ENCODE measurements at regions of chr3 and their contacts with region 1.

Region 1: DNA sequence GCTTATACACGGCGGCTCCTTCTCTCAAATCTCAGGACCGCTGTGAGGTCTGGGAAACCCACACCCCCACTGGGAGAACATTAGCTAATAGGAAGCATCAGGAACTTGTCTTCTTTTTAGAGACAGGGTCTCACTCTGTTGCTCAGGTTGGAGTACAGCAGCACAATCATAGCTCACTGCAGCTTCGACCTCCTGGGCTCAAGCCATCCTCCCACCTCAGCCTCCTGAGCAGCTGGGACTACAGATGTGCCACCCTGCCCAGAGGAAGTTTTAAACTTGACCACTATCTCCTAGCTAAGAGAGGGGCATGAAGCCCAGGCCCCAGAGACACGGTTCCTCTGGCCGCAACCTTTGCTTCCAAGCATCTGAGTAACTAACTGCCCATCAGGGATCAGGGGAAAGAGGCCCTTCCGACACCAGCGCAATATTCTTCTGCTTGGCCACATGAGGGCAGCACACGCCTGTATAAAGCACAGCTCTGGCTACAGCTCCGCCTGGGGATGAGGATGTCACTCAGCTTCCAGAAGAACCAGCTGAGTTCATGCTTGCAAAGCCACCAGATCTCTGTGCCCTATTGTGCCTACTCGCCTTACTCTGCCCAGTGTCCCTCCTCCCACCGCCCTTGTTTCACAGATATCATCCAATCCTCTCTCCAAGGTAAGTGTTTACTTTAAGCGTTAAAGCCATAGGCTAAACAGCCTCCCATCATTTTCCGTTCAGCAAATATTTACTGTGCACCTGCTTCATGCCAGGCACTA is 57.5 kb upstream of the SLC6A11 start:
- DNase-seq: peak in 4 of 5 donors; percentile 23 to 33 (median 32)
- H3K4me3 ChIP-seq: no peak overlapping the region
- H3K4me3 Mint-ChIP-seq: no peak overlapping the region
- H3K27ac ChIP-seq: no peak overlapping the region
- H3K27ac Mint-ChIP-seq: no peak overlapping the region
- H3K4me1 ChIP-seq: no peaks in the 10 kb centered on the region
- H3K4me1 Mint-ChIP-seq: no peaks in the 10 kb centered on the region
- H3K27me3 ChIP-seq: no peaks in the 10 kb centered on the region
- H3K27me3 Mint-ChIP-seq: peaks cover 28 to 44% of the 10 kb centered on the region in 2 donors

Region 2: GRCh38 chr3:10122724-10123123 is 635.8 kb before region 1 on chr3:
- CTCF ChIA-PET with region 1: no interaction called
- POLR2A ChIA-PET with region 1: no interaction called
- intact Hi-C with region 1: no loop called
- DNase-seq: no peak
- H3K4me3 ChIP-seq: no peak overlapping the region
- H3K4me3 Mint-ChIP-seq: no peak overlapping the region
- H3K27ac ChIP-seq: no peak overlapping the region
- H3K27ac Mint-ChIP-seq: peak overlapping the region in 4 of 7 donors; percentile 44 to 84 (median 68)
- H3K4me1 ChIP-seq: peaks cover 26% of the 10 kb centered on the region
- H3K4me1 Mint-ChIP-seq: peaks cover 28 to 45% (median 37%) of the 10 kb centered on the region in 4 donors
- H3K27me3 ChIP-seq: no peaks in the 10 kb centered on the region
- H3K27me3 Mint-ChIP-seq: no peaks in the 10 kb centered on the region

Region 3: DNA sequence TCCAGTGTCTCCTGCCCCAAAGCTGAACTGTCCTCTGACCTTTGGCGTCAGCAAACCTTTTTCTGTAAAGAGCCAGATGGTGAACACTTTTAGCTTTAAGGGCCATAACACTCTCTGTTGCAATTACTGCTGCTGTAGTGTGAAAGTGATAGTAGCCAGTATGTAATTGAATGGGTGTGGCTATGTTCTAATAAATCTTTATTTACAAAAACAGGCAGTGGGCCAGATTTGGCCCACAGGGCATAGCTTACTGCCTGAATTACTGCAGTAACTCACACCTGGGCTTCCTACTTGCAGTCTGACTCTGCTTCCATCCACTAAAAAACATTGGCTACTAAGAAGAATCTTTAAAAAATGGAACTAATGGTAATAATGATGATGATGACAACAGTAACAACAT is 10.4 kb before region 1 on chr3:
- CTCF ChIA-PET with region 1: interaction called, 19 read pairs
- POLR2A ChIA-PET with region 1: no interaction called
- intact Hi-C with region 1: no loop called
- DNase-seq: no peak
- H3K4me3 ChIP-seq: no peak overlapping the region
- H3K4me3 Mint-ChIP-seq: no peak overlapping the region
- H3K27ac ChIP-seq: no peak overlapping the region
- H3K27ac Mint-ChIP-seq: no peak overlapping the region
- H3K4me1 ChIP-seq: no peaks in the 10 kb centered on the region
- H3K4me1 Mint-ChIP-seq: no peaks in the 10 kb centered on the region
- H3K27me3 ChIP-seq: no peaks in the 10 kb centered on the region
- H3K27me3 Mint-ChIP-seq: peaks cover 7 to 13% of the 10 kb centered on the region in 2 donors

Region 4: GRCh38 chr3:10772271-10773161 is 14.0 kb after region 1 on chr3:
- CTCF ChIA-PET with region 1: interaction called, 11 read pairs
- POLR2A ChIA-PET with region 1: no interaction called
- intact Hi-C with region 1: no loop called
- DNase-seq: no peak
- H3K4me3 ChIP-seq: no peak overlapping the region
- H3K4me3 Mint-ChIP-seq: no peak overlapping the region
- H3K27ac ChIP-seq: no peak overlapping the region
- H3K27ac Mint-ChIP-seq: no peak overlapping the region
- H3K4me1 ChIP-seq: no peaks in the 10 kb centered on the region
- H3K4me1 Mint-ChIP-seq: no peaks in the 10 kb centered on the region
- H3K27me3 ChIP-seq: no peaks in the 10 kb centered on the region
- H3K27me3 Mint-ChIP-seq: peaks cover 15 to 37% of the 10 kb centered on the region in 2 donors

Region 5: GRCh38 chr3:10783357-10784351 is 25.2 kb after region 1 on chr3:
- CTCF ChIA-PET with region 1: interaction called, 13 read pairs
- POLR2A ChIA-PET with region 1: no interaction called
- intact Hi-C with region 1: loop called (anchors 1 kb)
- DNase-seq: peak in 4 of 5 donors; percentile 16 to 33 (median 26)
- H3K4me3 ChIP-seq: no peak overlapping the region
- H3K4me3 Mint-ChIP-seq: no peak overlapping the region
- H3K27ac ChIP-seq: no peak overlapping the region
- H3K27ac Mint-ChIP-seq: no peak overlapping the region
- H3K4me1 ChIP-seq: no peaks in the 10 kb centered on the region
- H3K4me1 Mint-ChIP-seq: no peaks in the 10 kb centered on the region
- H3K27me3 ChIP-seq: no peaks in the 10 kb centered on the region
- H3K27me3 Mint-ChIP-seq: peaks cover 13 to 21% of the 10 kb centered on the region in 2 donors

Region 6: GRCh38 chr3:11140054-11140712 is 381.7 kb after region 1 on chr3:
- CTCF ChIA-PET with region 1: no interaction called
- POLR2A ChIA-PET with region 1: no interaction called
- intact Hi-C with region 1: no loop called
- DNase-seq: no peak
- H3K4me3 ChIP-seq: no peak overlapping the region
- H3K4me3 Mint-ChIP-seq: peak overlapping the region in 3 of 8 donors; percentile 8 to 56 (median 20)
- H3K27ac ChIP-seq: no peak overlapping the region
- H3K27ac Mint-ChIP-seq: peak overlapping the region in 1 of 7 donors; percentile 3
- H3K4me1 ChIP-seq: no peaks in the 10 kb centered on the region
- H3K4me1 Mint-ChIP-seq: peaks cover 0 to 5% (median 2%) of the 10 kb centered on the region in 4 donors
- H3K27me3 ChIP-seq: no peaks in the 10 kb centered on the region
- H3K27me3 Mint-ChIP-seq: peaks cover 10 to 14% of the 10 kb centered on the region in 2 donors

Region 7: GRCh38 chr3:11335056-11335608 is 576.6 kb after region 1 on chr3:
- CTCF ChIA-PET with region 1: interaction called, 7 read pairs
- POLR2A ChIA-PET with region 1: no interaction called
- intact Hi-C with region 1: loop called (anchors 5 kb)
- DNase-seq: peak; percentile 34 to 53 (median 51)
- H3K4me3 ChIP-seq: no peak overlapping the region
- H3K4me3 Mint-ChIP-seq: no peak overlapping the region
- H3K27ac ChIP-seq: no peak overlapping the region
- H3K27ac Mint-ChIP-seq: peak overlapping the region in 2 of 7 donors; percentile 30 to 39
- H3K4me1 ChIP-seq: no peaks in the 10 kb centered on the region
- H3K4me1 Mint-ChIP-seq: peaks cover 0 to 3% (median 2%) of the 10 kb centered on the region in 4 donors
- H3K27me3 ChIP-seq: no peaks in the 10 kb centered on the region
- H3K27me3 Mint-ChIP-seq: no peaks in the 10 kb centered on the region